IMR-90 (cell line): ENCODE measurements at regions of chr7 and their contacts with region 1.

Region 1: DNA sequence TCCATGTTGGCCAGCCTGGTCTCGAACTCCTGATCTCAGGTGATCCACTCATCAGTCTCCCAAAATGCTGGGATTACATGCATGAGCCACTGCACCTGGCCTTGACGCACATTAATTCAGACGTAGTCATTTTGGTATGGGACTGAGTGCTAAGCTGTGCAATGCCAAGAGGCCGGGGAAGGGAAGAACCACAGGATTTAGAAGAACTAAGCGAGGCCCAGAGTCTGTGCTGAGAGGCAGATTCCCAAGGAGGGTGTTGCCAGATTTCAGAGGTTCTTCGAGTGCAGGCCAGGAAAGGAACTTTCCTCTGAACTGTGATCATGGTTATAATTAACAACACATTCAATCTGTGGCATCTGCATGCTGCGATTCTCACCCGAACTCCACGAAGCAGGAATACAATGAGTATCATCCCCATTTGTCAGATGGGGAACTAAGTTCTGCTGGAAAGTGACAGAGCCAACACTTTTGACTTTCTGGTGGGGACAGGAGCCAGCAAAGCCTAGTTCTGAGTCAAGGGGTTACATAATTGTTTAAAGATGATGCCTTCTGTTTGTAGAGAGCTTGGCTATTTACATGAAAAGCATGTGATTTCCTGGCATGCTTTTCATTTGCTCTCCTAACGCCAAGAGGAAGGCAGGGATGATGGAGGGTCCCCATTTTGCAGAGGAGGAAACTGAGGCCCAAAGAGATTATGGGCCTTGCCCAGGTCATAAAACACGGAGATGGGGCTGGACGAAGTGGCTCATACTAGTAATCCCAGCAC is 6.2 kb upstream of the ZAN start:
- DNase-seq: peak; percentile 61
- ATAC-seq: no peak
- H3K4me3 ChIP-seq: no peak overlapping the region
- H3K27ac ChIP-seq: no peak overlapping the region
- H3K4me1 ChIP-seq: peaks cover 9% of the 10 kb centered on the region
- H3K27me3 ChIP-seq: peaks cover 29% of the 10 kb centered on the region
- CTCF ChIP-seq: no peak
- POLR2A ChIP-seq: no peak
- RAD21 ChIP-seq: no peak

Region 2: GRCh38 chr7:100781255-100781654 is 54.1 kb after region 1 on chr7:
- CTCF ChIA-PET with region 1: interaction called, 3 read pairs
- POLR2A ChIA-PET with region 1: no interaction called
- dilution Hi-C with region 1: no loop called
- in situ Hi-C with region 1: no loop called
- intact Hi-C with region 1: loop called (anchors 5 kb)
- DNase-seq: no peak
- ATAC-seq: peak; percentile 63
- H3K4me3 ChIP-seq: no peak overlapping the region
- H3K27ac ChIP-seq: no peak overlapping the region
- H3K4me1 ChIP-seq: no peaks in the 10 kb centered on the region
- H3K27me3 ChIP-seq: peaks cover 19% of the 10 kb centered on the region
- CTCF ChIP-seq: no peak
- POLR2A ChIP-seq: no peak
- RAD21 ChIP-seq: no peak